B cell (primary cell): ENCODE measurements at regions of chr5 and their contacts with region 1.

Region 1: GRCh38 chr5:96662725-96663513 is 743 bp downstream of the CAST start:
- DNase-seq: peak; percentile 91
- ATAC-seq: peak; percentile 74
- H3K4me3 ChIP-seq: peak overlapping the region; percentile 60 to 89 (median 83)
- H3K4me3 Mint-ChIP-seq: peak overlapping the region; percentile 100
- H3K27ac ChIP-seq: peak overlapping the region; percentile 85 to 89
- H3K27ac Mint-ChIP-seq: peak overlapping the region; percentile 100
- H3K4me1 ChIP-seq: peaks cover 16 to 21% of the 10 kb centered on the region in 2 donors
- H3K4me1 Mint-ChIP-seq: peaks cover 53% of the 10 kb centered on the region
- H3K27me3 ChIP-seq: no peaks in the 10 kb centered on the region
- H3K27me3 Mint-ChIP-seq: no peaks in the 10 kb centered on the region
- CTCF ChIP-seq: no peak

Region 2: GRCh38 chr5:95554647-95555548 is 1108.0 kb before region 1 on chr5 and contains the starts of genes ARSK and SKIC3:
- CTCF ChIA-PET with region 1: no interaction called
- POLR2A ChIA-PET with region 1: no interaction called
- intact Hi-C with region 1: loop called (anchors 1 kb)
- DNase-seq: peak; percentile 99
- ATAC-seq: peak; percentile 85
- H3K4me3 ChIP-seq: peak within 1 kb of the TSS; percentile 70 to 91 (median 81)
- H3K4me3 Mint-ChIP-seq: peak within 1 kb of the TSS; percentile 93
- H3K27ac ChIP-seq: peak within 1 kb of the TSS; percentile 71 to 80
- H3K27ac Mint-ChIP-seq: peak within 1 kb of the TSS; percentile 90
- H3K4me1 ChIP-seq: peaks cover 14 to 20% of the 10 kb centered on the region in 2 donors
- H3K4me1 Mint-ChIP-seq: peaks cover 41% of the 10 kb centered on the region
- H3K27me3 ChIP-seq: no peaks in the 10 kb centered on the region
- H3K27me3 Mint-ChIP-seq: no peaks in the 10 kb centered on the region
- CTCF ChIP-seq: peak; percentile 29
- total RNA-seq, gene ARSK: 5.1 and 5.5 TPM in 2 replicates
- total RNA-seq, gene SKIC3: 75.4 and 85.3 TPM in 2 replicates

Region 3: DNA sequence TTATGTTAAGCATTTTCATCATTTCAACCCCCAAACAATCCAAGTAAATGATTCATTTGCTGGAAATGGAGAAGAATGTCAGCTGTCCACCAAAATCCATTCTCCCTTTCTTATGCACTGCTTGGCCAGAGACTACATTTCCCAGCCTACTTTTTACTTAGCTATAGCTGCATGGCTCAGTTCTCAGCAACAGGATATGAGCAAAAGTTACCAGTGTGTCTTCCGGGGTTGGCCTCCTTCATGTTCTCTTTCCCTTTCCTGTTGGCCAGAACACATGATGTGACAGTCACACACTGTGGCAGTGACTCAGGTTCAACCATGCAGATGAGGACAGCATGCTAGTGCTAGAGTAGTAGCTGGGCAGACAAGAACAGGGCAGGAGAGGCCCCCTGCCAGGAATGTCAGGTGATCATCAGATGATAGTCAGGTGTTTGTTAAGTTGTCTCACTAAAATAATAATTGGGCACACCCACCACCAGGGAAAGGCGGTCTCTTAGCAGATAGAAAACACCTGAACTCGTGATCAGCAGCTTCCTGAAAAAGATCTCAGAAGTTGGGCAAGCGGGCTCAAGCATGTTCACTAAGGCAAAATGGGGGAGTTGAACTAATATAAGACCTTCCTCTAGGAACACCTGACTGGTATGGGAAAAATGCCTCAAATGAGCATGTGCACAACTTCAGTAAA is 1030.8 kb before region 1 on chr5:
- CTCF ChIA-PET with region 1: no interaction called
- POLR2A ChIA-PET with region 1: no interaction called
- intact Hi-C with region 1: no loop called
- DNase-seq: peak; percentile 68
- ATAC-seq: peak; percentile 95
- H3K4me3 ChIP-seq: no peak overlapping the region
- H3K4me3 Mint-ChIP-seq: no peak overlapping the region
- H3K27ac ChIP-seq: peak overlapping the region in 1 of 2 donors; percentile 10
- H3K27ac Mint-ChIP-seq: peak overlapping the region; percentile 83
- H3K4me1 ChIP-seq: peaks cover 7 to 9% of the 10 kb centered on the region in 2 donors
- H3K4me1 Mint-ChIP-seq: peaks cover 11% of the 10 kb centered on the region
- H3K27me3 ChIP-seq: no peaks in the 10 kb centered on the region
- H3K27me3 Mint-ChIP-seq: peaks cover 4% of the 10 kb centered on the region
- CTCF ChIP-seq: no peak

Region 4: GRCh38 chr5:95808686-95809413 is 854.1 kb before region 1 on chr5:
- CTCF ChIA-PET with region 1: interaction called, 3 read pairs
- POLR2A ChIA-PET with region 1: no interaction called
- intact Hi-C with region 1: loop called (anchors 5 kb)
- DNase-seq: peak; percentile 95
- ATAC-seq: peak; percentile 100
- H3K4me3 ChIP-seq: peak overlapping the region in 3 of 5 experiments; percentile 27 to 39 (median 33)
- H3K4me3 Mint-ChIP-seq: peak overlapping the region; percentile 86
- H3K27ac ChIP-seq: peak overlapping the region; percentile 81 to 97
- H3K27ac Mint-ChIP-seq: peak overlapping the region; percentile 97
- H3K4me1 ChIP-seq: peaks cover 34 to 37% of the 10 kb centered on the region in 2 donors
- H3K4me1 Mint-ChIP-seq: peaks cover 58% of the 10 kb centered on the region
- H3K27me3 ChIP-seq: no peaks in the 10 kb centered on the region
- H3K27me3 Mint-ChIP-seq: no peaks in the 10 kb centered on the region
- CTCF ChIP-seq: no peak

Region 5: DNA sequence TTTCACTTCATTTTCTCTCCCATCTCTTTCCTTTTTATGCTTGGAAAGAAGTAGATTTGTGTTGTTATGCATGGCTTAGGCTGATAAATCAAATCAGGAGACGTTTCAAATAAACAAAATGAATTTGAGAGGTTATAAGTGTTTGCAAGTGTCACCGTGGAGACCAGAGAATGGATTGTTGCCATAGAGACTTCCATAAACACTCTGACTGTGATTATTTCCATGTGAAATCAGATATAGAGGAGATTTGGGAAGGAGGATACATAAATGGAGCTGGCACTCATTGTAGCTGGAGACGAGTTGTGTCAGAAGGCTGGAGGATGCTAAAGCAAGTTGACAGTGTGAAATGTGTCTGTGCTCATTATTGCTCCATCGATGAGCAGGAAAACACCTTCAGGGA is 145.6 kb before region 1 on chr5:
- CTCF ChIA-PET with region 1: no interaction called
- POLR2A ChIA-PET with region 1: no interaction called
- intact Hi-C with region 1: no loop called
- DNase-seq: no peak
- ATAC-seq: no peak
- H3K4me3 ChIP-seq: no peak overlapping the region
- H3K4me3 Mint-ChIP-seq: no peak overlapping the region
- H3K27ac ChIP-seq: no peak overlapping the region
- H3K27ac Mint-ChIP-seq: no peak overlapping the region
- H3K4me1 ChIP-seq: no peaks in the 10 kb centered on the region
- H3K4me1 Mint-ChIP-seq: no peaks in the 10 kb centered on the region
- H3K27me3 ChIP-seq: peaks cover 0 to 3% (median 0%) of the 10 kb centered on the region in 4 experiments
- H3K27me3 Mint-ChIP-seq: peaks cover 22% of the 10 kb centered on the region
- CTCF ChIP-seq: no peak

Region 6: GRCh38 chr5:96702503-96703383 is 39.8 kb after region 1 on chr5:
- CTCF ChIA-PET with region 1: no interaction called
- POLR2A ChIA-PET with region 1: interaction called, 4 read pairs
- intact Hi-C with region 1: loop called (anchors 1 kb)
- DNase-seq: peak; percentile 83
- ATAC-seq: peak; percentile 75
- H3K4me3 ChIP-seq: peak overlapping the region; percentile 0 to 65 (median 57)
- H3K4me3 Mint-ChIP-seq: peak overlapping the region; percentile 80
- H3K27ac ChIP-seq: peak overlapping the region; percentile 57 to 78
- H3K27ac Mint-ChIP-seq: peak overlapping the region; percentile 60
- H3K4me1 ChIP-seq: peaks cover 14 to 21% of the 10 kb centered on the region in 2 donors
- H3K4me1 Mint-ChIP-seq: peaks cover 36% of the 10 kb centered on the region
- H3K27me3 ChIP-seq: no peaks in the 10 kb centered on the region
- H3K27me3 Mint-ChIP-seq: no peaks in the 10 kb centered on the region
- CTCF ChIP-seq: no peak

Region 7: GRCh38 chr5:96876292-96876850 is 213.5 kb after region 1 on chr5 and contains the start of gene ERAP2:
- CTCF ChIA-PET with region 1: no interaction called
- POLR2A ChIA-PET with region 1: no interaction called
- intact Hi-C with region 1: loop called (anchors 5 kb)
- DNase-seq: peak; percentile 76
- ATAC-seq: peak; percentile 65
- H3K4me3 ChIP-seq: peak within 1 kb of the TSS; percentile 66 to 100 (median 84)
- H3K4me3 Mint-ChIP-seq: peak within 1 kb of the TSS; percentile 97
- H3K27ac ChIP-seq: peak within 1 kb of the TSS; percentile 69 to 75
- H3K27ac Mint-ChIP-seq: peak within 1 kb of the TSS; percentile 92
- H3K4me1 ChIP-seq: peaks cover 50 to 53% of the 10 kb centered on the region in 2 donors
- H3K4me1 Mint-ChIP-seq: peaks cover 74% of the 10 kb centered on the region
- H3K27me3 ChIP-seq: no peaks in the 10 kb centered on the region
- H3K27me3 Mint-ChIP-seq: no peaks in the 10 kb centered on the region
- CTCF ChIP-seq: no peak
- total RNA-seq, gene ERAP2: 74.2 and 76.5 TPM in 2 replicates

Region 8: GRCh38 chr5:97383996-97384395 is 721.1 kb after region 1 on chr5:
- CTCF ChIA-PET with region 1: no interaction called
- POLR2A ChIA-PET with region 1: no interaction called
- intact Hi-C with region 1: no loop called
- DNase-seq: no peak
- ATAC-seq: no peak
- H3K4me3 ChIP-seq: no peak overlapping the region
- H3K4me3 Mint-ChIP-seq: no peak overlapping the region
- H3K27ac ChIP-seq: no peak overlapping the region
- H3K27ac Mint-ChIP-seq: no peak overlapping the region
- H3K4me1 ChIP-seq: no peaks in the 10 kb centered on the region
- H3K4me1 Mint-ChIP-seq: no peaks in the 10 kb centered on the region
- H3K27me3 ChIP-seq: no peaks in the 10 kb centered on the region
- H3K27me3 Mint-ChIP-seq: no peaks in the 10 kb centered on the region
- CTCF ChIP-seq: no peak